Lower leg skin (tissue), 4 donors: ENCODE measurements at regions of chr11 and their contacts with region 1.

Region 1: GRCh38 chr11:75031771-75032549 is 43.2 kb downstream of the NEU3 start:
- DNase-seq: peak; percentile 30 to 87
- H3K4me3 ChIP-seq: no peak overlapping the region
- CTCF ChIP-seq: peak in 1 of 3 donors; percentile 28
- POLR2A ChIP-seq: no peak

Region 2: DNA sequence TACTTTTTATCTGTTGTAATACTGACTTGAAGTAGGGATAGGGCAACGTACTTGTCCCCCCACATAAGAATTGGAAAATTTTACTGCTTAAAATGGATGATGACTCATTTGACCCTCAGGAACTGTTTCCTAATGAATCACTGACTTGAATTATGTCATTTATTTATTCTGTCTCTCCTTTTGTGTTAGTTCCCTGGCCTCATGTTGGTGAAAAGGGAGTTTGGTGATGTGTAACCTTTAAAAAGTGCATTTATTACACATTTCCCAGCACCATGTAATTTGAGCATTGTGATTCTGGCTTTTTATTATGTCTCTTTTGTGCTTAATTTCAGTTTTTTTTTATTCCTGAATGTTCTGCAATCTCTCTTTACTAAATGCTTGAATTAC is 613.5 kb before region 1 on chr11:
- intact Hi-C with region 1: no loop called
- DNase-seq: no peak
- H3K4me3 ChIP-seq: no peak overlapping the region
- CTCF ChIP-seq: no peak
- POLR2A ChIP-seq: no peak

Region 3: GRCh38 chr11:74929431-74930363 is 102.3 kb before region 1 on chr11:
- intact Hi-C with region 1: loop called (anchors 5 kb)
- DNase-seq: peak in 1 of 2 donors; percentile 74
- H3K4me3 ChIP-seq: no peak overlapping the region
- CTCF ChIP-seq: no peak
- POLR2A ChIP-seq: no peak

Region 4: DNA sequence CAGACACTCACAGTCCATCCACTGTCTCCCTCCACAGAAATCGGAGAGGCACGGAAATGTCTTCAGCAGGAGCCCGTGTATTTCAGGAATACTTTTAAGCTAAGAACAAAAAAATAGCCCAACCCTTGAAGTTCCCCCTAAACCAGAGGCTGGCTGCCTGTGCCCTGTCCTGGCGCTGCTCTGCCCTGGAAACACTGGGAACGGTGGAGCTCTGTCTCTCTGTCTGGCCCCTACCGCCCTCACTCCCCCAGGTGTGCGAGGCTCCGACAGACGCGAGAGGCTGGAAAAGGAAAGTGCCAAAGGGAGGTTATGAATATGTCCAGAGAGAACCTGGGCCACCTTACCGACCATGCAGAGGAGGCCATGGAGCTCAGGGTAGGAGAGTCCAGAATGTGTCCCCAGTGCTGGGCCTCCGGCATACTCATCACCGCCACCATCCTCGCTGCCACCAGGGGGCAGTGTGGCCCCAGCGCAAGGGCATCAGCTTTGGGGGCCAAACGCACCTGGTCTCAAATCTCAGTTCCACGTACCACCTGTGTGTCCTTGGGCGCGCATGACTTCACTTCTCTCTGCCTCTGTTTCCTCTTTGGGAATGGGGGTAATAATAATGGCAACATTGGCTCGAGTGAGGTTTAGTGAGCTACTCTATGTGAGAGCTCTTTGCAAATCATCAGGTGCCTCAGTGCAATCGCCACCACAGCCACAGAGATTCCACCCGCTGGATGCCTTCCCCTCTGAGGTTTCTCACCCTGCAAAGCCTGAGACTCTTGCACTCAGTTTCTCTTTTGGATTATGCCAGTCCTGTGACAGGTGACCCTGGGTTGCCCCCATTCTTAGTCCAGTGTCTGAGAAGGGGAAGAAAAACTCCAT is 108.5 kb after region 1 on chr11:
- intact Hi-C with region 1: no loop called
- DNase-seq: peak; percentile 35 to 91
- H3K4me3 ChIP-seq: no peak overlapping the region
- CTCF ChIP-seq: no peak
- POLR2A ChIP-seq: no peak

Region 5: GRCh38 chr11:75445315-75445953 is 413.5 kb after region 1 on chr11:
- intact Hi-C with region 1: no loop called
- DNase-seq: peak; percentile 63 to 94
- H3K4me3 ChIP-seq: no peak overlapping the region
- CTCF ChIP-seq: peak in 1 of 3 donors; percentile 94
- POLR2A ChIP-seq: no peak